CD8-positive, alpha-beta T cell (primary cell): ENCODE measurements at regions of chr9 and their contacts with region 1.

Region 1: DNA sequence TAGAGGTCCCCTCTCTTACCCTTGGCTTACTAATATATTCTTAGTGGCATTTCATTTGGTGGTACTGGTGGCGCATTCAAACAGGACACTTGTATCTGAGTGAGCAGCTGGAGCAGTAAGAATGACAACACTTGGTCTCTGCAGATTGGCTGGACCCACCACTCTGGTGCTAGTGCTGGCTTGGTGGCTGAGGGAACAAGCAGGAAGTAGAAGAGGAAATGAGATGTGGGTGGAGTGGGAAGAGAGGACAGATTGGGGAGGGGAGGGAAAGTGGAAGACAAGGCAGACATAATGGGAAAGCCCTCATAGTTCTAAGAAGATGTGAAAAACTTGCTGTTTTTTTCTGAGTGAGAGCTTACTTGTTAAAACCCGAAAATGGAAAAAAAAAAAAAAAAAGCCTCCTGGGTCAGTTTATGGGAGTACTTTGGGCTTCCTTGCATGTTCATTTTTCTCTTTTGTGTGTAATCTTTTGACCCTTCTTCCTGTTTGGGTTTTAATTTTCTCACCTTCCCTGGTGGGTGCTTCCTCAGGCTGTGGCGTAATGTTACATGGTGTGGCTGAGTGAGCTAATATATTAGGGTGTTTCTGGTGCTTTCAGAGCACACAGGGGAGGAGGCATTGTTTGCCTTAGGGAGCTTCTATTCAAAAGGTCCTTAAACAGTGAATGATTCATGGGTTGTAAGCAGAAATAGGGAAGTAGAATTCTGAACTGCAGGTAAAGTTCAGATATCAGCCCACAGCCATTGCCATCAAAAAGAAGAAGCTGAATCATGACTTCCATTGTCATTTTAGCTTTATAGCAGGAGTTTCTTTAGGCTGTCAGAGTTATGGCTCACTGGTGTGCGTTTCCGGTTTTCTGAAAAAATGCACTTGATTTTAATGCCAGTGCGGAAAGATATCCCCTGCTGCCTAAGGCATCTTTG is 52.3 kb downstream of the TLE4 start:
- DNase-seq: peak in 8 of 9 experiments; percentile 5 to 87 (median 37)
- ATAC-seq: peak; percentile 92
- H3K4me3 ChIP-seq: peak overlapping the region; percentile 0 to 17
- H3K4me3 Mint-ChIP-seq: peak overlapping the region; percentile 70
- H3K27ac ChIP-seq: peak overlapping the region; percentile 1 to 66
- H3K27ac Mint-ChIP-seq: peak overlapping the region; percentile 87
- H3K4me1 ChIP-seq: peaks cover 22% of the 10 kb centered on the region
- H3K4me1 Mint-ChIP-seq: peaks cover 71% of the 10 kb centered on the region
- H3K27me3 ChIP-seq: no peaks in the 10 kb centered on the region
- H3K27me3 Mint-ChIP-seq: no peaks in the 10 kb centered on the region
- CTCF ChIP-seq: no peak

Region 2: DNA sequence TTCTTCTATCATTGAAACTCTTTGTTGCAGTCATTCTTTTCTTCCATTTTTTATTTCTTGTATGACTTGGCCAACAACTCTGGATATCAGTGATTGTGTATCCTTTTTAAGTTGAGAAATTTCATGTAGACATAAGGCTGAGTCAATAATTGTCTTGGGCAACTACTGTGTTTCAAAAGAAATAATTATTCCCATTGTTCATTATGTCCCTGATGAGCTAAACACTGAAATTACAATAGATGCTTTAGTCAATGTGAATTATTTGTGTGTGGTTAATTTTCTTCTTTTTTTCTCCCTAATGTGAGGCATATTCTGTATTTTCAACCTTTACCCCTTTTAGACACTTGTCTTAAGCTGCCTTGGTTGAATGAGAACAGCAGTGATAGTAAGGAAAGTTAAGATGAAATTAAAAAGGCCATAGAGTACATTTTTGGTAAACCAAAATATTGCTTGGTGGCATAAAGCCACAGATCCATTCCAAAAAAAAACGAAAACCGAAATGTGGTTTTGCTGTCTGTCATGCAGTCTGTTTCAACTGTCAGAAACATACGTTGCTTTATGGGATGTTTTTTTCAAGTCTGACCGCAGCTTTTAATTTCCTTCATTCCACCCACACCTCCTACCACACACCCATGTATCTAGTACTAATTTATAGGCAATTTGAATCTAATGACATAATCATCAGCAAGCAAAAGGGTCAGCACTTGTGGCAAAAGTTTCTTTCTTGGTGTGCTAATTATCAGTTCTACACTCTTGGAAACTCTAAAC is 31.1 kb before region 1 on chr9:
- CTCF ChIA-PET with region 1: no interaction called
- POLR2A ChIA-PET with region 1: interaction called, 5 read pairs
- intact Hi-C with region 1: loop called in 1 of 2 experiments (anchors 5 kb)
- DNase-seq: peak in 2 of 9 experiments; percentile 64 to 78
- ATAC-seq: peak; percentile 85
- H3K4me3 ChIP-seq: no peak overlapping the region
- H3K4me3 Mint-ChIP-seq: peak overlapping the region; percentile 48
- H3K27ac ChIP-seq: no peak overlapping the region
- H3K27ac Mint-ChIP-seq: no peak overlapping the region
- H3K4me1 ChIP-seq: peaks cover 57% of the 10 kb centered on the region
- H3K4me1 Mint-ChIP-seq: peaks cover 81% of the 10 kb centered on the region
- H3K27me3 ChIP-seq: no peaks in the 10 kb centered on the region
- H3K27me3 Mint-ChIP-seq: no peaks in the 10 kb centered on the region
- CTCF ChIP-seq: no peak

Region 3: GRCh38 chr9:79600466-79600865 is 23.6 kb before region 1 on chr9:
- CTCF ChIA-PET with region 1: no interaction called
- POLR2A ChIA-PET with region 1: interaction called, 4 read pairs
- intact Hi-C with region 1: loop called in 1 of 2 experiments (anchors 2 kb)
- DNase-seq: no peak
- ATAC-seq: no peak
- H3K4me3 ChIP-seq: no peak overlapping the region
- H3K4me3 Mint-ChIP-seq: no peak overlapping the region
- H3K27ac ChIP-seq: no peak overlapping the region
- H3K27ac Mint-ChIP-seq: no peak overlapping the region
- H3K4me1 ChIP-seq: peaks cover 38% of the 10 kb centered on the region
- H3K4me1 Mint-ChIP-seq: peaks cover 46% of the 10 kb centered on the region
- H3K27me3 ChIP-seq: no peaks in the 10 kb centered on the region
- H3K27me3 Mint-ChIP-seq: no peaks in the 10 kb centered on the region
- CTCF ChIP-seq: no peak

Region 4: DNA sequence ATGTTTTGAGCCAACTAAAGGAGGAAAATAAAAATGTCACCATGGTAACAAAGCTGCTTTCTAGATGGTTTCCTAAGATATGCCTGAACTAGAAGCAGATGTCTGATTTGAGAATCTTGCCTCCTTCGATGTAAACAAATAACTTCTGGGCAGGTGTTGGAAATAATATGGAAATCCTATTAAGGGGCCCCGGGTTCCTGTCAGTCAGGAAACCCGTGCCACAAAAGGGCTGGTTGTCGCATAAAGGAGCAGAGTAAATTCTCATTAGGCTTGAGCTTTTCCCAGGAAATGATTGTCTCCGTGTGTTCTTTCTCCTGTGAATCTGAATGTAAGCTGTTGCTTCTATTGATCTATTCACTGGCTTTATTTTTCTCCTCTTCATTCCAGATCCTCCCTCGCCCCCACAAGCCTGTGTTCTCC is 38.5 kb after region 1 on chr9:
- CTCF ChIA-PET with region 1: no interaction called
- POLR2A ChIA-PET with region 1: interaction called, 3 read pairs
- intact Hi-C with region 1: loop called in 1 of 2 experiments (anchors 5 kb)
- DNase-seq: peak in 1 of 9 experiments; percentile 35
- ATAC-seq: no peak
- H3K4me3 ChIP-seq: no peak overlapping the region
- H3K4me3 Mint-ChIP-seq: no peak overlapping the region
- H3K27ac ChIP-seq: no peak overlapping the region
- H3K27ac Mint-ChIP-seq: no peak overlapping the region
- H3K4me1 ChIP-seq: no peaks in the 10 kb centered on the region
- H3K4me1 Mint-ChIP-seq: peaks cover 35% of the 10 kb centered on the region
- H3K27me3 ChIP-seq: no peaks in the 10 kb centered on the region
- H3K27me3 Mint-ChIP-seq: no peaks in the 10 kb centered on the region
- CTCF ChIP-seq: no peak

Region 5: GRCh38 chr9:79673614-79674013 is 49.6 kb after region 1 on chr9:
- CTCF ChIA-PET with region 1: no interaction called
- POLR2A ChIA-PET with region 1: no interaction called
- intact Hi-C with region 1: no loop called
- DNase-seq: peak in 2 of 9 experiments; percentile 10 to 31
- ATAC-seq: no peak
- H3K4me3 ChIP-seq: no peak overlapping the region
- H3K4me3 Mint-ChIP-seq: no peak overlapping the region
- H3K27ac ChIP-seq: no peak overlapping the region
- H3K27ac Mint-ChIP-seq: no peak overlapping the region
- H3K4me1 ChIP-seq: peaks cover 12% of the 10 kb centered on the region
- H3K4me1 Mint-ChIP-seq: peaks cover 56% of the 10 kb centered on the region
- H3K27me3 ChIP-seq: no peaks in the 10 kb centered on the region
- H3K27me3 Mint-ChIP-seq: no peaks in the 10 kb centered on the region
- CTCF ChIP-seq: no peak

Region 6: DNA sequence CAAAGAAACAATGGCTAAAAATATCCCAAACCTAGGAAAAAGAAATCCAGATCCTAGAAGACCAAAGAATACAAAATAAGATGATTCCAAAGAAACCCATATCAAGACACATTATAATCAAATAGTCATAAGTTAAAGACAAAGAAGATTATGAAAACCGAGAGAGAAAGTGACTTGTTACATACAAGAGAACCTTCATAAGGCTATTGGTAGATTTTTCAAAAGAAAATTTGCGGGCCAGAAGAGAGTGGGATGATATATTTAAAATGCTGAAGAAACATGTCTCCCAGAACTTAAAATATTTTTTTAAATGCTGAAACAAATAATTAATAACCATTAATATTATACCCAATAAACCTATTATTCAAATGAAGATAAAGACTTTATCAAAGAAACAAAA is 635.0 kb after region 1 on chr9:
- CTCF ChIA-PET with region 1: no interaction called
- POLR2A ChIA-PET with region 1: no interaction called
- intact Hi-C with region 1: no loop called
- DNase-seq: no peak
- ATAC-seq: no peak
- H3K4me3 ChIP-seq: no peak overlapping the region
- H3K4me3 Mint-ChIP-seq: no peak overlapping the region
- H3K27ac ChIP-seq: no peak overlapping the region
- H3K27ac Mint-ChIP-seq: no peak overlapping the region
- H3K4me1 ChIP-seq: no peaks in the 10 kb centered on the region
- H3K4me1 Mint-ChIP-seq: no peaks in the 10 kb centered on the region
- H3K27me3 ChIP-seq: no peaks in the 10 kb centered on the region
- H3K27me3 Mint-ChIP-seq: no peaks in the 10 kb centered on the region
- CTCF ChIP-seq: no peak